Esophagus muscularis mucosa (tissue), 4 donors: ENCODE measurements at regions of chr7 and their contacts with region 1.

Region 1: GRCh38 chr7:24665564-24666294 is 91.5 kb downstream of the GSDME start:
- DNase-seq: no peak
- H3K4me3 ChIP-seq: no peak overlapping the region
- H3K27ac ChIP-seq: no peak overlapping the region
- H3K4me1 ChIP-seq: no peaks in the 10 kb centered on the region
- H3K27me3 ChIP-seq: no peaks in the 10 kb centered on the region
- CTCF ChIP-seq: peak; percentile 55 to 67 (median 64)
- EP300 ChIP-seq: no peak
- POLR2A ChIP-seq: no peak

Region 2: GRCh38 chr7:23570592-23571200 is 1095.0 kb before region 1 on chr7:
- intact Hi-C with region 1: loop called (anchors 10 kb)
- DNase-seq: no peak
- H3K4me3 ChIP-seq: no peak overlapping the region
- H3K27ac ChIP-seq: no peak overlapping the region
- H3K4me1 ChIP-seq: peaks cover 0 to 5% (median 0%) of the 10 kb centered on the region in 4 donors
- H3K27me3 ChIP-seq: peaks cover 0 to 23% (median 0%) of the 10 kb centered on the region in 4 donors
- CTCF ChIP-seq: peak; percentile 80 to 88 (median 84)
- EP300 ChIP-seq: no peak
- POLR2A ChIP-seq: no peak

Region 3: GRCh38 chr7:24284699-24285506 is 380.8 kb before region 1 on chr7:
- intact Hi-C with region 1: loop called (anchors 5 kb)
- DNase-seq: no peak
- H3K4me3 ChIP-seq: peak overlapping the region in 1 of 4 donors; percentile 9
- H3K27ac ChIP-seq: no peak overlapping the region
- H3K4me1 ChIP-seq: peaks cover 0 to 18% (median 14%) of the 10 kb centered on the region in 4 donors
- H3K27me3 ChIP-seq: peaks cover 0 to 64% (median 13%) of the 10 kb centered on the region in 4 donors
- CTCF ChIP-seq: no peak
- EP300 ChIP-seq: no peak
- POLR2A ChIP-seq: no peak

Region 4: DNA sequence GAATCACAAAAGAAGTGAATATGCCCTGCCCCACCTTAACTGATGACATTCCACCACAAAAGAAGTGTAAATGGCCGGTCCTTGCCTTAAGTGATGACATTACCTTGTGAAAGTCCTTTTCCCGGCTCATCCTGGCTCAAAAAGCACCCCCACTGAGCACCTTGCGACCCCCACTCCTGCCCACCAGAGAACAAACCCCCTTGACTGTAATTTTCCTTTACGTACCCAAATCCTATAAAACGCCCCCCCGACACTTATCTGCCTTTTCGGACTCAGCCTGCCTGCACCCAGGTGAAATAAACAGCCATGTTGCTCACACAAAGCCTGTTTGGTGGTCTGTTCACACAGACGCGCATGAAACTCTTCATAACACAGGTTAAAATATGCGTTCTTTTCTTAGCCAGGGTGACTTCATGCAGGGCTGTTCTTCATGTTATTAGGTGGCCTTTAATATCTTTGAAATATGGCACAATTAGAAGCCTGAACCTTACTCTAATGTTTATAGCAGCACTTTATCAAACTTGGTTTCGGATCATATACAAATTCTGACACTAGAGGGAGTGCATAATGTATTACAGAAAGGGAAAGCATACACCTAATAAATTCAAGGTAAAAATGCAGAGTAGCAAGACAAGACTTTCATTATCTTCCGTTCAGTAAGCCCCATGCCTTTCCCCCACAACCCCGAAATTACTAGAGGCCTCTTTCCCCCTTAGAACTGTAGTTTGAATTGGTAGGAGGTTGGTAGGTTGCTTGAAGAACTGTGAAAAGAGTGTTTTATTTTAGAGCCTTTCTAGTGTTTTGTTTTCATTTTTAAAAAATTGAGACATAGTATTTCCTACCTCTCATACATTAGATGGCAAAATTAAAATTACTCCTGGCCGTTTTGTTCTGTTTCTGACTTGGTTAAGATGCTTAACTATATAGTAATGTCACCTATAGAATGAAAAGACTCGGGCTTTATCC is 263.8 kb before region 1 on chr7:
- intact Hi-C with region 1: loop called (anchors 2 kb)
- DNase-seq: no peak
- H3K4me3 ChIP-seq: no peak overlapping the region
- H3K27ac ChIP-seq: no peak overlapping the region
- H3K4me1 ChIP-seq: no peaks in the 10 kb centered on the region
- H3K27me3 ChIP-seq: no peaks in the 10 kb centered on the region
- CTCF ChIP-seq: peak in 2 of 3 experiments; percentile 21 to 35
- EP300 ChIP-seq: no peak
- POLR2A ChIP-seq: no peak

Region 5: GRCh38 chr7:24477398-24478136 is 188.2 kb before region 1 on chr7:
- intact Hi-C with region 1: no loop called
- DNase-seq: no peak
- H3K4me3 ChIP-seq: no peak overlapping the region
- H3K27ac ChIP-seq: peak overlapping the region; percentile 40 to 62 (median 45)
- H3K4me1 ChIP-seq: peaks cover 4 to 23% (median 20%) of the 10 kb centered on the region in 4 donors
- H3K27me3 ChIP-seq: no peaks in the 10 kb centered on the region
- CTCF ChIP-seq: no peak
- EP300 ChIP-seq: no peak
- POLR2A ChIP-seq: no peak

Region 6: DNA sequence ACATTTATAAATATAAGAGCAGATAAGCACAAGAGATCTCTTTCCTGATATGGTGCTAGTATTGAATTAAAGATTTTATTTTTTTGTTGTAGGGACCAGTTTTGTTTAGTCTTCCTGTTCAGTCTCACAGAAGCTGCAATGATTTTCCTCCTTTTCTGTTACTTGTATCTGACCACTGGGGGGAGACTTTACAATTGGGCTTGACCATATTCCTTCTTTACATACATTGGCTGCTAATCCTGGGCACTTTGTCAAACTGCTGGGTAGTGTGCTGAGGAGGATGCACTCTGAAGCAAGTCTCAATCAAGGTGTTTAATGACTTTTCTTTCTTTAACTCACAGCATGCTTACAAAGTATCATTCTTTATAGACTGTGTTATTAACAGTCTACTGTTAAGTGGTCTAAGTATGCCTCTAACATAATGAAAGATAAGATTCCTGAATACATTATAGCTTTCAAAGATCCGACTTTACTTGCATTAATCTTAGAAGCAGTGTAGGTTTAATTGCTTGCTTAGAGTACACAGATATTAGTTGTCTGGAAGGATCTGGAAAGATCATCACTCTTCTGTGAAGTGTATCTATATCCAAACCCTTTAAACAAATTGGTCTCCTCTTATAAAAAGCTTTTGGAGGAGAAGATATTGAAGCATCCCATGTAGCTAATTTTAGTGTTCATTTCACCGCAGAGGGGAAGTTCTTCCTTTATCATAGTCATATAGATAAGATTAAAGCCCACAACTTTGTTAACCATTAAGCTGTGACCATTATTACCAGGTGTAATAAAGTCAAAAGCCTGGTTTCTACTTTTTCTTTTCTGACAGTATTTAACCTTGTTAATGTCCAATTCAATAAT is 89.3 kb before region 1 on chr7:
- intact Hi-C with region 1: loop called (anchors 5 kb)
- DNase-seq: no peak
- H3K4me3 ChIP-seq: no peak overlapping the region
- H3K27ac ChIP-seq: no peak overlapping the region
- H3K4me1 ChIP-seq: peaks cover 5 to 23% (median 14%) of the 10 kb centered on the region in 4 donors
- H3K27me3 ChIP-seq: no peaks in the 10 kb centered on the region
- CTCF ChIP-seq: peak; percentile 42 to 60 (median 48)
- EP300 ChIP-seq: no peak
- POLR2A ChIP-seq: no peak

Region 7: GRCh38 chr7:24715661-24716479 is 50.1 kb after region 1 on chr7:
- intact Hi-C with region 1: no loop called
- DNase-seq: peak; percentile 87
- H3K4me3 ChIP-seq: no peak overlapping the region
- H3K27ac ChIP-seq: no peak overlapping the region
- H3K4me1 ChIP-seq: no peaks in the 10 kb centered on the region
- H3K27me3 ChIP-seq: no peaks in the 10 kb centered on the region
- CTCF ChIP-seq: peak in 1 of 3 experiments; percentile 26
- EP300 ChIP-seq: no peak
- POLR2A ChIP-seq: no peak

Region 8: GRCh38 chr7:25456467-25457171 is 790.9 kb after region 1 on chr7:
- intact Hi-C with region 1: no loop called
- DNase-seq: no peak
- H3K4me3 ChIP-seq: no peak overlapping the region
- H3K27ac ChIP-seq: peak overlapping the region in 3 of 4 donors; percentile 37 to 60 (median 43)
- H3K4me1 ChIP-seq: peaks cover 5 to 23% (median 15%) of the 10 kb centered on the region in 4 donors
- H3K27me3 ChIP-seq: no peaks in the 10 kb centered on the region
- CTCF ChIP-seq: no peak
- EP300 ChIP-seq: no peak
- POLR2A ChIP-seq: no peak